AG04449 (cell line): ENCODE measurements at regions of chr11 and their contacts with region 1.

Region 1: GRCh38 chr11:1515082-1516060 is 28.8 kb upstream of the MOB2 start:
- DNase-seq: no peak
- H3K4me3 ChIP-seq: no peak overlapping the region
- CTCF ChIP-seq: peak; percentile 99

Region 2: DNA sequence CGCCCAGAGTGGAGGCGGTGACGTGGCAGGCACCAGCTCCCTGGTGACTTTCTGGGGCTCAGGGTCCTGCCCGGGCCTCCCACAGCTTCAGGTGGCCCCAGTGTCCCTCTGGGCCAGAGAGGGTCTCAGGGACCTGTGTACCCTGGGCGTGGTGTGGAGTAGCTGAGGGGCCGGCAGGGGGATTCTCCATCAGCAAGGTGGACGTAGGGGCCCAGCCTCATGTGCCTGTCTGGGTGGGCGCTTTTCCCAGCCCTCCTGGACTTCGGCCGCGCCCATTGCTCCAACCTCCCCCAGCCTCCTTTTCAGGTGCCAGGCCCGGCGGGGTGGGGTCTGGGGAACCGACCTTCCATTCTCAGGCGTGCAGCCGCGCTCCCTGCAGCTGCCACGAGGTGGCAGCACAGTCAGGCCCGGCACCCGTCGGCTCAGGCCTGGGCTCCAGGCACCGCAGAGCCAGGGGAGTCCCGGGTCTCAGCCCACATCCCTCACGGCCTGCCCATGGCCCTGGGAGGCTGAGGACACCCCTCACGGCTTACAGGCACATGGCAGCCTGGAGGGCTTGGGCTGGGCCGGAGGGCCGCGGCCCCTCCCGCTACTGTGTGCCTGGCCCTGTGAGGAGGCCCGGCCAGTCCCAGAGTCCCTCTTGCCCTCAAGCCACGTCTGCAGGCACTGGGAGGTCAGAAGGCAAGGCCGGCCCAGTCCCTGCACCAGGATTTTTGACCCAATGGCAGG is 312.4 kb before region 1 on chr11:
- CTCF ChIA-PET with region 1: interaction called, 40 read pairs
- POLR2A ChIA-PET with region 1: no interaction called
- DNase-seq: no peak
- H3K4me3 ChIP-seq: no peak overlapping the region
- CTCF ChIP-seq: peak; percentile 91

Region 3: DNA sequence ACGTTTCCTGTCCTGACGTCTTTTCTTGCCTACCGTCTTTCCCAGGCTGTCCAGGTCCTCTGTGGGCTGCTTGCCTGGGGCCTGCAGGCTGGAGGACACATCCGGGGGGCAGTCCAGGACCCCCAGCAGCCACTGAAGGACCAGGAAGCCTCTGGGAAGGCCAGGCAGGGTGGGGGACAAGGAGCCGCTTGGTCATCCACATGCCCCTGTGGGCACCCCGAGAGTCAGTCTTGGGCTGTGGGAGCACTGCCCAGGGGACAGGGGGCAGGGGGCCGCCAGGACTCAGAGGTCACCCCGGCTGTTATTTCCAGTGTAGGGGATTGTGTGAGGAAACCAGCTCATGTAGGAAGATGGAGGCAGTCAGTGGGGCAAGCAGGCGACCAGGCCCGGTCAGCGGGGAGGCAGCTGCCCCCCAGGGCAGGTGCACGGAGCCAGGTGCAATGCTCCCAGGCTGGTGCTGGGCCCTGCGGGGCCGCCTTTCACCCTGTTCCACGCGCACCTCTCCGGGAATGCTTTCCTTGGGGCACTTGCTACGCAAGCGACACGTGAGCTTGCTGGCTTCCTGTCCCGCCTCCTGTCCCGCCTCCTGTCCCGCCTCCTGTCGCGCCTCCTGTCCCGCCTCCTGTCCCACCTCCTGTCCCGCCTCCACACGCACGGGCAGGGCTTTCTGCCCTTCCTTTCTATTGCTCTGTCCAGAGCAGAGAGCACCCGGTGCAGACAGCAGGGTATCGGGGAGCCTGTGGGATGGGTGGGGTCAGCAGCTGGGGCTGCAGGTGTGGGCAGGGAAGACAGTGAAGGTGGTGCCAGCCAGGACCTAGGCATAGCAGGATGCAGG is 253.0 kb before region 1 on chr11:
- CTCF ChIA-PET with region 1: interaction called, 17 read pairs
- POLR2A ChIA-PET with region 1: no interaction called
- DNase-seq: peak; percentile 57
- H3K4me3 ChIP-seq: peak overlapping the region; percentile 63
- CTCF ChIP-seq: no peak

Region 4: GRCh38 chr11:1502954-1503707 is 12.2 kb before region 1 on chr11:
- CTCF ChIA-PET with region 1: interaction called, 32 read pairs
- POLR2A ChIA-PET with region 1: no interaction called
- DNase-seq: no peak
- H3K4me3 ChIP-seq: no peak overlapping the region
- CTCF ChIP-seq: no peak

Region 5: GRCh38 chr11:1572197-1573076 is 57.1 kb after region 1 on chr11 and contains the start of gene DUSP8:
- CTCF ChIA-PET with region 1: interaction called, 11 read pairs
- POLR2A ChIA-PET with region 1: no interaction called
- DNase-seq: no peak
- H3K4me3 ChIP-seq: peak within 1 kb of the TSS; percentile 63
- CTCF ChIP-seq: no peak

Region 6: GRCh38 chr11:1598816-1599215 is 83.4 kb after region 1 on chr11:
- CTCF ChIA-PET with region 1: no interaction called
- POLR2A ChIA-PET with region 1: no interaction called
- DNase-seq: no peak
- H3K4me3 ChIP-seq: no peak overlapping the region
- CTCF ChIP-seq: no peak